ENCODE measurements at regions of chr3 and their contacts with region 1.

Region 1: DNA sequence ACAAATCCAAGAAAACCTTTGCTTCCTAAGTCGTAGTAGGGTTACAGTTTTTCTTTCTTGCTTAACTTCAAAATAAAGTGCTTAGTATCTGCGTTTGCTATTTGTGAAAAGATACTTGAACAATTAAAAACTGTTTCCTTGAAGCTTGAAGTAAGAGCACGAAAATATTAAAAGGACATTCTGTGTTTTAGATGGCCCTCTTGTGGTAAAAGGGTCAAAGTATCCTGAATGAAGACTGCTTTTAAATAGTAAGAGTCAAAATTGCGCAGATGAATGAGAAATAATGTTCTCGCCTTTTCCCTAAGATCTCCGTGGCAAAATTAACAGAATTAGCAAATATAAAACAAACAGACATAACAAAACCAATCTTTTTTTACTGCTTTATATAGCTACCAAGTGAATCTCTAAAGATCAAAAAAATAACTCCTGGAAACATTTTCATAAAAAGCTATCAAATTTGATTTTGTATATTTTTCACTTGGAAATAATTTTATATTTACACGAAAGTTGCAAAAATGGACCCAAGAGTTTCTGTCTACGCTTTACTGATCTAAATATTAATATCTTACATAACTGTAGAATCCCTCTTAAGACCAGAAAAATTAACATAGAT is 175.4 kb downstream of the MBNL1 start:
- ATAC-seq: peak in 3 of 8 experiments; percentile 25 to 34 (median 30)
- H3K4me3 ChIP-seq: no peak overlapping the region
- H3K27ac ChIP-seq: no peak overlapping the region
- H3K4me1 ChIP-seq: no peaks in the 10 kb centered on the region

Region 2: GRCh38 chr3:152071924-152072323 is 372.2 kb before region 1 on chr3:
- in situ Hi-C with region 1: loop called in 2 of 9 experiments (anchors 10 to 25 kb)
- ATAC-seq: peak in 3 of 8 experiments; percentile 67 to 74 (median 74)
- H3K4me3 ChIP-seq: no peak overlapping the region
- H3K27ac ChIP-seq: no peak overlapping the region
- H3K4me1 ChIP-seq: no peaks in the 10 kb centered on the region

Region 3: DNA sequence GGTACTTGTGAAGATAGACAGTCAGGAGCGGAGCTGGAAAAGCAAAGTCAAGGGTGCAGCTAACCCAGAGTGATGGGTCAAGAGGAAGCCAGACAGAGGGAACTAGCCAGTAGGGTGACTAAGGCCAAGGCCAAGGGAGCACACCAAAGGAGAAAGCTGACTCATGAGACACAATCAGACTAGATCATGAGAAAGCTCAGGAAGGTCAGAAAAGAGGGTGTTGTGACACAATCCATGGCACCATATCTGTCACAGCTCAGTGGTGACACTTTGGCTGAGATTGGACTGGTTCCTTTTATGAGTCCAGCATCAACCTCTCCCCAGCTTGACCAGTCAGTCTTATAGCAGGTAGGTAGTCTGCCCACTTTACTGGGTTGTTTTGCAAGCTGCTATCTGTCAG is 412.9 kb after region 1 on chr3:
- in situ Hi-C with region 1: no loop called
- ATAC-seq: no peak
- H3K4me3 ChIP-seq: no peak overlapping the region
- H3K27ac ChIP-seq: no peak overlapping the region
- H3K4me1 ChIP-seq: no peaks in the 10 kb centered on the region

Region 4: DNA sequence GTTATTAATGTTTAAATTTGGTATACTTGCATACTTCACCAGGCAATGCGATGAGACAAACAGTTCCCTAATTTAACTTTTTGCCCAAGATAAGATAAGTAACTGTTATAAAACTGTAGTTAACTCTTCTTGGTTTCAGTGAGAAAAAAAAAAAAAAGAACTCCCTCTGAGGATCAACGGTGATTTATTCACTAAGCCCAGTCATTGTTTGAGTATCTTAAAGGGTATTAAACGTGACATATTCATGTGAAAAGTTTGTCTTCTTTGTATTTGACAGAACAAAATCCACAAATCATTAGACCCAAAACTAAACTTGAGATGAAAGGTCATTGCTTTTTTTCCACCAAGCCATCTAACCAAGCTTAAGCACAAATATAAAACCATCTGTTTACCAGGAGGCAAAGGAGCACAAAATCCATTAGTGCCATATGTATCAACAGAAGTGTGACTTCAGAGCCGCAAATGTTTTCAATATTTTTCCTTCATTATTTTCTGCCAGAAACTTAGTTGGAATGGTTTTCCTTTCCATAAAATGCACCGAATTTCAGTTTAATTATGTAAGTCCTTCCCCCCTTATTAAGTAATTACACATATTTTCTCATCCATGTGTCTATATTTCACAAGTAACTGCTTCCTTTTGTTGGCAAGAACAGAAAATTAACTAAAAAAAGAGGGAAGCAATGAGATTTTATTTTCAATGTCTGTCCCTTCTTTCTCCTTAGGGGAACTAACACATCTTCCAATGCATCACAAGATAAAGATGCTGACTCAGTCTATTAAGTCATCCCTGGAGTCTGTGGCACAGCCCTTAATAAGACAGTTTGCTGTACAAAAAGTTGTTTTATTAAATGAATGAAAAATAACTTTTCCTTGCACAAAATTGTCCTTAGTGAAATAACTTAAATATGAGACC is 625.7 kb after region 1 on chr3:
- in situ Hi-C with region 1: no loop called
- ATAC-seq: peak in 3 of 8 experiments; percentile 52 to 95 (median 93)
- H3K4me3 ChIP-seq: no peak overlapping the region
- H3K27ac ChIP-seq: no peak overlapping the region
- H3K4me1 ChIP-seq: no peaks in the 10 kb centered on the region

Measured in motor neuron (in vitro differentiated cells).